Mammary epithelial cell (primary cell): ENCODE measurements at regions of chr19 and their contacts with region 1.

Region 1: GRCh38 chr19:46924874-46925547 is 64.2 kb downstream of the ARHGAP35 start:
- DNase-seq: peak; percentile 63
- H3K4me3 ChIP-seq: peak overlapping the region in 1 of 3 experiments; percentile 13
- H3K27ac ChIP-seq: peak overlapping the region; percentile 97
- H3K4me1 ChIP-seq: peaks cover 52% of the 10 kb centered on the region
- H3K27me3 ChIP-seq: no peaks in the 10 kb centered on the region
- CTCF ChIP-seq: no peak

Region 2: GRCh38 chr19:46878613-46879375 is 46.2 kb before region 1 on chr19:
- CTCF ChIA-PET with region 1: no interaction called
- dilution Hi-C with region 1: no loop called
- in situ Hi-C with region 1: no loop called
- intact Hi-C with region 1: loop called (anchors 5 kb)
- DNase-seq: peak; percentile 64
- H3K4me3 ChIP-seq: no peak overlapping the region
- H3K27ac ChIP-seq: no peak overlapping the region
- H3K4me1 ChIP-seq: peaks cover 36% of the 10 kb centered on the region
- H3K27me3 ChIP-seq: no peaks in the 10 kb centered on the region
- CTCF ChIP-seq: no peak

Region 3: GRCh38 chr19:46890423-46891170 is 34.4 kb before region 1 on chr19:
- CTCF ChIA-PET with region 1: no interaction called
- dilution Hi-C with region 1: loop called (anchors 5 kb)
- in situ Hi-C with region 1: no loop called
- intact Hi-C with region 1: loop called (anchors 5 kb)
- DNase-seq: peak; percentile 60
- H3K4me3 ChIP-seq: no peak overlapping the region
- H3K27ac ChIP-seq: no peak overlapping the region
- H3K4me1 ChIP-seq: peaks cover 15% of the 10 kb centered on the region
- H3K27me3 ChIP-seq: no peaks in the 10 kb centered on the region
- CTCF ChIP-seq: no peak

Region 4: DNA sequence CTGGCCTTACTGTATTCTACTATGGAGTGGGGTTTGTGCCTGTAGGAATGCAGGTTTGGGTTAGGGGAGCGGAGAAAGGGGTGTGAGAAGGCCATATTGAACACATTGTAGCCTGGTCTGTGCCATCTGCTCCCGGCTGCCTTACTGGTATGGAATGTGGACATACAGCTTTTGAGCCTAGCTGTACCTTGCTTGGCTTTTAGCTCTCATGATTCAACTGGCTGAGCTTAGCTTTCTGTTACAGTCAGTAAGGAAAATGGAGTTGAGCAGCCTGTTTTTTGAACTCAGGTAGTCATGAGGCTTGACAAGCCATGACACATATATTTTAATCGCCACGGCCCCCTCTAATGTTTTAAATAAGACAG is 22.6 kb before region 1 on chr19:
- CTCF ChIA-PET with region 1: no interaction called
- dilution Hi-C with region 1: no loop called
- in situ Hi-C with region 1: no loop called
- intact Hi-C with region 1: loop called (anchors 1 kb)
- DNase-seq: peak; percentile 90
- H3K4me3 ChIP-seq: peak overlapping the region in 2 of 3 experiments; percentile 16 to 26
- H3K27ac ChIP-seq: peak overlapping the region; percentile 91
- H3K4me1 ChIP-seq: peaks cover 54% of the 10 kb centered on the region
- H3K27me3 ChIP-seq: no peaks in the 10 kb centered on the region
- CTCF ChIP-seq: no peak

Region 5: GRCh38 chr19:46913852-46914430 is 11.1 kb before region 1 on chr19:
- CTCF ChIA-PET with region 1: no interaction called
- dilution Hi-C with region 1: no loop called
- in situ Hi-C with region 1: no loop called
- intact Hi-C with region 1: loop called (anchors 2 kb)
- DNase-seq: peak; percentile 26
- H3K4me3 ChIP-seq: no peak overlapping the region
- H3K27ac ChIP-seq: no peak overlapping the region
- H3K4me1 ChIP-seq: peaks cover 5% of the 10 kb centered on the region
- H3K27me3 ChIP-seq: no peaks in the 10 kb centered on the region
- CTCF ChIP-seq: no peak

Region 6: DNA sequence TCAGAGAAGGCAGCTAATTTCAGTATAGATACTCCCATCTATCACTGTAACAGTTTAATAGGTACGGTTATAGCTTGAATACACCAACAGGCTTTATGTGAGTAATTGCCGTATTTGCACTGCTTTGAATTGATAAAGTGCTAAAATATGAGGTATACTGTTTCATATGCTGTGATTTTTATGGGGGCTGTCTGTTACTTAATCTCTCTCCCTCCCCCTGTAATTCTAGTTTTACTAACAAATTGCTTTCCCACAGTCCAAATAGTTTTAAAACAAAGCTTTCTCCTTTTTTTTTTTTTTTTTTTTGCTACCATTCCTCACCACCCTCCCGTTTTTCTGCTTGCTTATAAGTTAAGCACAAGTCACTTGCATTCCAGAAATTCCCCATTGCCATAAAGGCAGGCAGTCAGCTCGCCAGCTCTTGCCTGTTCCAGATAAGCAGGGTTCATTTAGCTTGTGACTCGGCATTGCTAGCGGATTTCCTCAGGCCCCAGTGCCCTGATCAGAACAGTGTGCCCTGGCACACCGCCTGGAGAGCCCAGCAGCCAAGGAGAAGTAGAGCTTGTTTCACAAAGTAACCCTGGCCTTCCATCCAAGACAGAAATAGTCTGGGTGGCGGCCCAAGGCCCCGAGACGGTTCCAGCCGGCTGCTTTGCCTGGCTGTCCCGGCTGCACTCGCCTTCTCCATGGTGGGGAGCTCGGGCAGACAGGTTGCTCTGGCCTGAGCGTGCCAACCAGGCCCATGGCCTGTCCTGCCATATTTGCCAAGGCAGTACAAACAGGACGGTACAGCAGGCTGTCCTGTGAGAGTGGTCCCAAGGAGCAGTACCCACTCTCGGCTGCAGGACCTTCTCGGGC is 51.1 kb after region 1 on chr19:
- CTCF ChIA-PET with region 1: interaction called, 4 read pairs
- dilution Hi-C with region 1: no loop called
- in situ Hi-C with region 1: no loop called
- intact Hi-C with region 1: loop called (anchors 2 kb)
- DNase-seq: peak; percentile 56
- H3K4me3 ChIP-seq: no peak overlapping the region
- H3K27ac ChIP-seq: no peak overlapping the region
- H3K4me1 ChIP-seq: peaks cover 14% of the 10 kb centered on the region
- H3K27me3 ChIP-seq: no peaks in the 10 kb centered on the region
- CTCF ChIP-seq: no peak

Region 7: GRCh38 chr19:46990991-46991676 is 66.1 kb after region 1 on chr19:
- CTCF ChIA-PET with region 1: no interaction called
- dilution Hi-C with region 1: no loop called
- in situ Hi-C with region 1: no loop called
- intact Hi-C with region 1: loop called (anchors 2 kb)
- DNase-seq: peak; percentile 60
- H3K4me3 ChIP-seq: no peak overlapping the region
- H3K27ac ChIP-seq: no peak overlapping the region
- H3K4me1 ChIP-seq: no peaks in the 10 kb centered on the region
- H3K27me3 ChIP-seq: no peaks in the 10 kb centered on the region
- CTCF ChIP-seq: peak; percentile 77 to 89